WTC11 (cell line): ENCODE measurements at regions of chr2 and their contacts with region 1.

Region 1: GRCh38 chr2:237685408-237685807 is 58.0 kb downstream of the LRRFIP1 start:
- DNase-seq: no peak
- ATAC-seq: peak; percentile 91
- H3K4me3 Mint-ChIP-seq: no peak overlapping the region
- H3K27ac Mint-ChIP-seq: peak overlapping the region; percentile 11; the same call in 1 of the 2 replicates
- H3K4me1 Mint-ChIP-seq: peaks cover 11% of the 10 kb centered on the region
- H3K27me3 Mint-ChIP-seq: no peaks in the 10 kb centered on the region
- CTCF ChIP-seq: no peak

Region 2: GRCh38 chr2:237700512-237701032 is 15.2 kb after region 1 on chr2:
- CTCF ChIA-PET with region 1: interaction called, 15 read pairs
- POLR2A ChIA-PET with region 1: interaction called, 6 read pairs
- DNase-seq: no peak
- ATAC-seq: peak; percentile 7; the same call in 1 of the 2 replicates
- H3K4me3 Mint-ChIP-seq: no peak overlapping the region
- H3K27ac Mint-ChIP-seq: peak overlapping the region; percentile 99
- H3K4me1 Mint-ChIP-seq: peaks cover 88% of the 10 kb centered on the region
- H3K27me3 Mint-ChIP-seq: no peaks in the 10 kb centered on the region
- CTCF ChIP-seq: no peak

Region 3: GRCh38 chr2:237731663-237732062 is 46.3 kb after region 1 on chr2:
- CTCF ChIA-PET with region 1: interaction called, 14 read pairs
- POLR2A ChIA-PET with region 1: no interaction called
- DNase-seq: no peak
- ATAC-seq: no peak
- H3K4me3 Mint-ChIP-seq: no peak overlapping the region
- H3K27ac Mint-ChIP-seq: no peak overlapping the region
- H3K4me1 Mint-ChIP-seq: peaks cover 80% of the 10 kb centered on the region
- H3K27me3 Mint-ChIP-seq: no peaks in the 10 kb centered on the region
- CTCF ChIP-seq: no peak